CD4-positive, alpha-beta memory T cell (primary cell): ENCODE measurements at regions of chr20 and their contacts with region 1.

Region 1: DNA sequence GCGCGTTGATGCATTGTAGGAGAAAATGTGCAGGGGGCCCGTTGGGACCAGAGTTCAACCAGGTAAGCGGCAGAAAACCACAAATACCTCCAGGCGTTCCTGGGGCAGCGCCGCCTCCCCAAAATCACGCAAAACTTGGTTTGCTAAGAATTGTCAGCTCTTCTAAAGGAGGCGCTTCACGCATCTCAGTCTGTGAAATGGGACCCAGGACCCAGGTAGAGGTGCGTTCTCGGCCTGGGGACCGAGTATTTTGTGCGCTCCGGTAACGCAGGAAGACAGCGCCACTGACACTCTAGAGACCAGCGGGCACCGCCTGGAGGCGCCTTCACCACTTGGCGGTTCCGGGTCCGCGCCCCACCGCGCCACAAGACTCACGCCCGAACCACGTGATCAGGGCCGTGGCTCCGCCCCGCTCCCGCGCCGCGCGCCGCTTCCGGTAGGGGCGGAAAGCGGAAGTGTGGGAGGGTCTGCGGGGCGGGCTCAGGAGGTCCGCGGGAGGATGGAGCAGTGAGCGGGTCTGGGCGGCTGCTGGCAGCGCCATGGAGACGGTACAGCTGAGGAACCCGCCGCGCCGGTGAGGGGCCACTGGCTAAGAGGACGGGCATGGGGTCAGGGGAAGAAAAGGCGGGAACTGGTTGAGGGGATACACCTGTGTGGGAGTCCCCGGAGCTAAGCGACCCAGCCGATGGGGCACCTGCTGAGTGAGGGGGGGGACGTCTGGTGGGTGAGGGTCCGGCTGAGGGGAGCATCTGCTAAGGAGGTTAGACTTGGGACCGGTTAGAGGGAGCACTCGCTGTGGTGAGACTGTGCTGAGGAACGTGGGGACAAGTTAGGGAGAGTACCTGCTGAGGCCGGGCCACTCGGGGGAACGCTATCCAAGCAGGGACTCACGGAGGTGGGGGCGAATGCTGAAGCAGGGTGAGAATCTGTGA is at the start of gene STK4:
- DNase-seq: peak; percentile 93 to 98 (median 96)
- H3K4me3 ChIP-seq: peak within 1 kb of the TSS; percentile 87 to 96
- H3K4me3 Mint-ChIP-seq: peak within 1 kb of the TSS; percentile 93 to 100 (median 98)
- H3K27ac ChIP-seq: peak within 1 kb of the TSS; percentile 89
- H3K27ac Mint-ChIP-seq: peak within 1 kb of the TSS; percentile 89 to 96 (median 91)
- H3K4me1 ChIP-seq: peaks cover 38% of the 10 kb centered on the region
- H3K4me1 Mint-ChIP-seq: peaks cover 28 to 73% (median 38%) of the 10 kb centered on the region in 4 donors
- H3K27me3 ChIP-seq: no peaks in the 10 kb centered on the region
- H3K27me3 Mint-ChIP-seq: no peaks in the 10 kb centered on the region
- total RNA-seq, gene STK4: 358 to 374 TPM

Region 2: DNA sequence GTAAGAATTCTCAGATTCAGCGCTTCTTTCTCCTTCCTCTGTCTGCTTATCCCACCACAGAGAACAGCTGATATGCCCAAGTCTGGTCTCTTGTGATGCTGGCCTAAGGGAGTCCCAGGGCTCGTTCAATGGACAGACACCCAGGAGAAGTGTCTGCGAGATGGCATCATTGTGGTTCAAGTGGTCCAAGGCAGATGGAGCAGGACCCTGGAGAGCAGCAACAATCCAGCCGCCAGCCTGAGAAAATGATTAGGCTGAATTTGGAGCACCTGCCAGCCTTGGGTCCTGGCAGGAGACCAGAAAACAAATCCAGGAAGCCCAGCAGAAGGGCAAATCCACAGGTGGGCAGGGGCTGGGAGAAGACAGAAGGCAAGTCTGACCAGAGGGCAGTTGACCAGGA is 1922.4 kb before region 1 on chr20:
- CTCF ChIA-PET with region 1: no interaction called
- POLR2A ChIA-PET with region 1: no interaction called
- intact Hi-C with region 1: no loop called
- DNase-seq: no peak
- H3K4me3 ChIP-seq: no peak overlapping the region
- H3K4me3 Mint-ChIP-seq: no peak overlapping the region
- H3K27ac ChIP-seq: no peak overlapping the region
- H3K27ac Mint-ChIP-seq: no peak overlapping the region
- H3K4me1 ChIP-seq: no peaks in the 10 kb centered on the region
- H3K4me1 Mint-ChIP-seq: no peaks in the 10 kb centered on the region
- H3K27me3 ChIP-seq: no peaks in the 10 kb centered on the region
- H3K27me3 Mint-ChIP-seq: peaks cover 0 to 1% of the 10 kb centered on the region in 2 donors

Region 3: DNA sequence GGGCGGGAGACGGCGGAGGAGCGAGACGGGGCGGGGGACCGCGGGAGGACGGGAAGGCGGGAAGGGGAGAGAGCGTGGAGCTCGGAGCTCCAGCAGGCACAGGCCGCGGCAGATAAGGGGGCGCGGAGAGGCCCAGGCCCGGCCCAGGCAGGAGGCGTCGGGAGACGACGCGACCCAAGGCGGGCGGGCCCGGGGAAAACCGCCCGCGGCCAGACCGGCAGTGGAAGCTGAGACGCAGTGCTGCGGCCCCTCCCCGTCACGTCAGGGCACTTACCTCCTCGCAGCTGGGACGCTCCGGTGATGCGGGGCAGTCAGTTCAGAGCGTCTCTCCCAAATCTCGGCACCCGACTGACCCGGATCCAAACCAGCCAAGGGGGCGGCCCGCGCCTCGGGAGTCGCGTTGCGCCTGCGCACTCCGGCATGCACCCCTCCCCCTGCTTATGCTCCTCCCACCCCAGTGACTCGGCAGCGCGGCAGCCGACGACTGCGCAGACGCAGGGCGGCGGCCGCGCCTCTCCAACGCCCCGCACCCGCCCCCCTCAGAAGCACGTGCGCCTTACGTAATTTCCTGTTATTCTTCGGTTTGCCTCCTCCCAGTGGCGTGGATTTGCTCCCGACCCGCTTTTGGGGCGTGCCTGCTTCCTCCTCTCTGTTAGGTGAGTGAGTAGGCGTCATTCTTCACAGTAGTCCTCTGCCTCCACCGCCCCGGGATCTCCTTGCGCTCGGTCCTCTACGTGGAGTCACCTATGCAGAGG is 755.7 kb before region 1 on chr20 and contains the start of gene OSER1:
- CTCF ChIA-PET with region 1: no interaction called
- POLR2A ChIA-PET with region 1: no interaction called
- intact Hi-C with region 1: loop called (anchors 10 kb)
- DNase-seq: peak; percentile 99
- H3K4me3 ChIP-seq: peak within 1 kb of the TSS; percentile 77 to 78
- H3K4me3 Mint-ChIP-seq: peak within 1 kb of the TSS; percentile 85 to 99 (median 94)
- H3K27ac ChIP-seq: peak within 1 kb of the TSS; percentile 98
- H3K27ac Mint-ChIP-seq: peak within 1 kb of the TSS; percentile 90 to 100 (median 98)
- H3K4me1 ChIP-seq: peaks cover 53% of the 10 kb centered on the region
- H3K4me1 Mint-ChIP-seq: peaks cover 42 to 79% (median 56%) of the 10 kb centered on the region in 4 donors
- H3K27me3 ChIP-seq: no peaks in the 10 kb centered on the region
- H3K27me3 Mint-ChIP-seq: no peaks in the 10 kb centered on the region
- total RNA-seq, gene OSER1: 35.5 to 36.6 TPM

Region 4: DNA sequence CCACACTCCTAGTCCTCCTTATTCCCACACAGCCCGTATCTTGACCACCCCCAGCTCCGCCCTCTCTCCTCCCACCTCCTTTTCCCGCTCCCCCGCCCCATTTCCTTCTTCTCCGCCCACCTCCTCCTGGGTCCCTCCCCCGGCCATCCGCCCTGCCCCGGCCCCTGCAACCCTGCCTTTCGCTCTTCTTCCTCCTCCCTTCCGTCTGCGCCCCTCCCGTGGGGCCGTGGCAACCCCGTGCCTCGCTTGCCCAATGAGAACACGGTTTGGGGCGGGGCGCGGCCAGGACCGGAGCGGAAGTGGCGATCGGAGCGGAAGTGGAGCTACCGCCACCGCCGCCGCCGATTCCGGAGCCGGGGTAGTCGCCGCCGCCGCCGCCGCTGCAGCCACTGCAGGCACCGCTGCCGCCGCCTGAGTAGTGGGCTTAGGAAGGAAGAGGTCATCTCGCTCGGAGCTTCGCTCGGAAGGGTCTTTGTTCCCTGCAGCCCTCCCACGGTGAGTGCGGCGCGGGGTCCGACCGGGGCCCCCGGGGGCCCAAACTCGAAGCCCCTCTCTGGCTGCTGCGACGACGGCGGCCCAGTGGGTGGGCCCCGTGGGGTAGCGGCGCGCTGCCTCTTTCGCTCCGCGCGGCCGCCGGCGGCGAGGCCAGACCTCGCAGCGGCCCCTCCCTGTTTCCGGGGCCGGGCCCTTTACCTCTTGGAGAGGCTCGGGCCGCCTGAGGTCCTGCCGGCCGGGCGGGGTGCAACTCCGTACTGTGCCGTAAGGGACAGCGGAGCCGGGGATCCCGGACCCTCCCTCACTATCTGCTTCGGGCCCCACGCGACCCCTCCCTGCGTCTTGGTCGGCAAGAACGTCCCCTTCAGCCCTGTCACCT is 80.7 kb before region 1 on chr20 and contains the start of gene YWHAB:
- CTCF ChIA-PET with region 1: interaction called, 17 read pairs
- POLR2A ChIA-PET with region 1: interaction called, 21 read pairs
- intact Hi-C with region 1: loop called (anchors 1 kb)
- DNase-seq: peak; percentile 94 to 97 (median 95)
- H3K4me3 ChIP-seq: peak within 1 kb of the TSS; percentile 82 to 87
- H3K4me3 Mint-ChIP-seq: peak within 1 kb of the TSS; percentile 92 to 98 (median 97)
- H3K27ac ChIP-seq: peak within 1 kb of the TSS; percentile 85
- H3K27ac Mint-ChIP-seq: peak within 1 kb of the TSS; percentile 95 to 98 (median 97)
- H3K4me1 ChIP-seq: peaks cover 55% of the 10 kb centered on the region
- H3K4me1 Mint-ChIP-seq: peaks cover 45 to 76% (median 56%) of the 10 kb centered on the region in 4 donors
- H3K27me3 ChIP-seq: no peaks in the 10 kb centered on the region
- H3K27me3 Mint-ChIP-seq: no peaks in the 10 kb centered on the region
- total RNA-seq, gene YWHAB: 245 to 262 TPM

Region 5: DNA sequence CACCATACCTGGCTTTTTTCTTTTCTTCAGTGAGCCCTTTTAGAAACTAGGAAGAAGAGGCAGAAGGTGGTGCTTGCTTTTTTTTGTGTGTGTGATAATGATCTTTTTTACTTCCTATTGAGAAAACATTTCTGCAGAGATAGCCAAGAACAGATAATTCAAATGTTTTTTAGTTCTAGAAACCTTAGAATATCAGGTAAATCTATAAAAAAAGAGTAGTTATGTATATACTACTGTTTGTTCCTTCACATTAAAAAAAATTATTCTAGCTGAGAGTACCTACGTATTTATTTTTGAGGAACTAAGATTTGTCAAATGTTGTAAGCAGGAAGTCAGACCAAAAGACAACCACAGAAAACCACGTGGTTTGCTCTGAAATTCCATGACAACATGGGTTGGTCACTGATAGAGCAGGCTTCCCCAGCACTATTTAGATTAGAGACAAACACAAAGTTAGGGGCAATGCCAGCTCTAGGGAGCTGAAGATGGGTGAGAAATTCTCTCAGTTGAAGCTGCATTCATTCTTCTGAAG is 12.9 kb after region 1 on chr20:
- CTCF ChIA-PET with region 1: interaction called, 63 read pairs
- POLR2A ChIA-PET with region 1: interaction called, 246 read pairs
- intact Hi-C with region 1: loop called (anchors 1 kb)
- DNase-seq: peak; percentile 86 to 94 (median 88)
- H3K4me3 ChIP-seq: peak overlapping the region; percentile 11 to 33
- H3K4me3 Mint-ChIP-seq: peak overlapping the region; percentile 67 to 91 (median 83)
- H3K27ac ChIP-seq: peak overlapping the region; percentile 84
- H3K27ac Mint-ChIP-seq: peak overlapping the region; percentile 92 to 99 (median 97)
- H3K4me1 ChIP-seq: peaks cover 98% of the 10 kb centered on the region
- H3K4me1 Mint-ChIP-seq: peaks cover 65 to 94% (median 80%) of the 10 kb centered on the region in 4 donors
- H3K27me3 ChIP-seq: no peaks in the 10 kb centered on the region
- H3K27me3 Mint-ChIP-seq: no peaks in the 10 kb centered on the region

Region 6: DNA sequence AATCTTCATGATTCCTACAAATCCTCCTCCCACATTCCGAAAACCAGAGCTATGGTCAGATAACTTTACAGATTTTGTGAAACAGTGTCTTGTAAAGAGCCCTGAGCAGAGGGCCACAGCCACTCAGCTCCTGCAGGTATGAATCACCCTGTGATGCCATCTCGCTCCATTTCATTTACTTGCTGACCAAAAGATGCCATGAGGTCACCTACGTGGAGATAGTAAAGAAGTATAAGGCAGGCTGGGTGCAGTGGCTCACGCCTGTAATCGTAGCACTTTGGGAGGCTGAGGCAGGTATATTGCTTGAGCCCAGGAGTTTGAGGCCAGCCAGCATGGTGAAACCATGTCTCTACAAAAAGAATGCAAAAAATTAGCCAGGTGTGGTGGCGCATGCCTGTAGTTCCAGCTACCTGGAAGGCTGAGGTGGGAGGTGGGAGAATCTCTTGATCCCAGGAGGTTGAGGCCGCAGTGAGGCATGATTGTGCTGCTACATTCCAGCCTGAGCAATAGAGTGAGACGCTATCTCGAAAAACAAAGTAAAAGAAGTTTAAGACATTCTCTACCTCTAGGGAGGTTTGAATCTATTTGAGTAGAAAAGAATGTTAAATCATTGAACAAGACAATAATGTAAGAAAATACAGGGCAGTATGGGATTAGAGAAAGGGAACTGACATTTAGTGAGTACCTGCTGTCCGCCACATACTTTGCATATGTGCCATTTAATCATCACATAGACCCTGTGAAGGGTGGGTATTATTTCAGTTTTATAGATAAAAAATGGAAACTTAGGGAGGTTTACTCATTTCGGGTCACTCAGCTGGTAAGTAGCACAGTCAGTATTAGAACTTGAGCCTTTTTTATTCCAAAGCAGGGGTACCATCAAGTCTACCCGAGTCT is 31.1 kb after region 1 on chr20:
- CTCF ChIA-PET with region 1: interaction called, 5 read pairs
- POLR2A ChIA-PET with region 1: interaction called, 91 read pairs
- intact Hi-C with region 1: no loop called
- DNase-seq: no peak
- H3K4me3 ChIP-seq: no peak overlapping the region
- H3K4me3 Mint-ChIP-seq: peak overlapping the region in 2 of 8 donors; percentile 17 to 39
- H3K27ac ChIP-seq: no peak overlapping the region
- H3K27ac Mint-ChIP-seq: peak overlapping the region; percentile 11 to 90 (median 61)
- H3K4me1 ChIP-seq: peaks cover 60% of the 10 kb centered on the region
- H3K4me1 Mint-ChIP-seq: peaks cover 42 to 82% (median 62%) of the 10 kb centered on the region in 4 donors
- H3K27me3 ChIP-seq: no peaks in the 10 kb centered on the region
- H3K27me3 Mint-ChIP-seq: no peaks in the 10 kb centered on the region

Region 7: GRCh38 chr20:45293041-45294002 is 327.0 kb after region 1 on chr20:
- CTCF ChIA-PET with region 1: interaction called, 3 read pairs
- POLR2A ChIA-PET with region 1: no interaction called
- intact Hi-C with region 1: loop called (anchors 5 kb)
- DNase-seq: peak; percentile 70 to 77 (median 71)
- H3K4me3 ChIP-seq: peak overlapping the region; percentile 40 to 64
- H3K4me3 Mint-ChIP-seq: peak overlapping the region; percentile 68 to 84 (median 79)
- H3K27ac ChIP-seq: no peak overlapping the region
- H3K27ac Mint-ChIP-seq: no peak overlapping the region
- H3K4me1 ChIP-seq: peaks cover 11% of the 10 kb centered on the region
- H3K4me1 Mint-ChIP-seq: peaks cover 2 to 8% (median 4%) of the 10 kb centered on the region in 4 donors
- H3K27me3 ChIP-seq: no peaks in the 10 kb centered on the region
- H3K27me3 Mint-ChIP-seq: peaks cover 9 to 30% of the 10 kb centered on the region in 2 donors